ENCODE measurements at regions of chr2 and their contacts with region 1.

Region 1: GRCh38 chr2:25041928-25042320 is at the start of gene EFR3B:
- DNase-seq: peak; percentile 93
- H3K4me3 Mint-ChIP-seq: peak within 1 kb of the TSS; percentile 73
- H3K27ac Mint-ChIP-seq: no peak within 1 kb of the TSS
- H3K4me1 Mint-ChIP-seq: peaks cover 30% of the 10 kb centered on the region
- H3K27me3 Mint-ChIP-seq: peaks cover 39% of the 10 kb centered on the region
- total RNA-seq, gene EFR3B: 1.5 TPM

Region 2: DNA sequence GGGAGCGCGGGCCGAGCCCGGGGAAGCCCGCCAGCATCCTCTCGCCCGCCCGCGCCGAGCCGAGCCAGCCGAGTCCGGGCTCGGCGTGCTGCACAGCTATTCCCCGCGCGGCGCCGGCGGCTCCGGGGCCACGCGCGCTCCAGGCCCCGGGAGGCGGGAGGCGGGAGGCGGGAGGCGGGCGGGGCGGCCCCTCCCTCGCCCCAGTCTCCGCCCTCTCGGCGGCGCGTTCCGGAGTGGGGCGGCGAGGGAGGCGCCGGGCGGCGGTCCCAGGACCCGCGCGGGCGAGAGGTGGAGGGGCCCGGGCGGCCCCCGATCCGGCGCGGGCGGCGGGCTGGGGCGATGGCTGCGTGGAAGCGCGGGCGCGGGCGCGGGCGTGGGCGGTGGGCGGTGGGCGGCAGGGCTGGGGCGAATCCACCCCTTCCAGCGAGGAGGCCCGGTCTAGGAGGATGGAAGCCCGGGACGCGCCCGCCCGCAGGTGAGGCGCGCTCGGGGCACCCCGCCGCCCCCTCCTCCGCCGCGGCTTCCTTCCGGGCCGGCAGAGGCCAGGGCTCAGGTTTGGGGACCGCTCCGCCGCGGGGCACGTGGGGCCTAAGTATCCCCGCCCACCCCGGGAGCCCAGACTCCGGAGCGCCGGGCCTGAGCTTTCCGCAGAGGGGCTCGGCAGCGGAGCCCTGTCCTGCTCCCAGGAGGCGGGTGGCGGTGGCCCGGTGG is 121.7 kb before region 1 on chr2 and contains the start of gene ADCY3:
- CTCF ChIA-PET with region 1: no interaction called
- POLR2A ChIA-PET with region 1: no interaction called
- intact Hi-C with region 1: loop called (anchors 2 kb)
- DNase-seq: peak; percentile 77
- H3K4me3 Mint-ChIP-seq: peak within 1 kb of the TSS; percentile 97
- H3K27ac Mint-ChIP-seq: peak within 1 kb of the TSS; percentile 94
- H3K4me1 Mint-ChIP-seq: peaks cover 39% of the 10 kb centered on the region
- H3K27me3 Mint-ChIP-seq: no peaks in the 10 kb centered on the region
- total RNA-seq, gene ADCY3: 68.7 to 71.7 TPM

Region 3: DNA sequence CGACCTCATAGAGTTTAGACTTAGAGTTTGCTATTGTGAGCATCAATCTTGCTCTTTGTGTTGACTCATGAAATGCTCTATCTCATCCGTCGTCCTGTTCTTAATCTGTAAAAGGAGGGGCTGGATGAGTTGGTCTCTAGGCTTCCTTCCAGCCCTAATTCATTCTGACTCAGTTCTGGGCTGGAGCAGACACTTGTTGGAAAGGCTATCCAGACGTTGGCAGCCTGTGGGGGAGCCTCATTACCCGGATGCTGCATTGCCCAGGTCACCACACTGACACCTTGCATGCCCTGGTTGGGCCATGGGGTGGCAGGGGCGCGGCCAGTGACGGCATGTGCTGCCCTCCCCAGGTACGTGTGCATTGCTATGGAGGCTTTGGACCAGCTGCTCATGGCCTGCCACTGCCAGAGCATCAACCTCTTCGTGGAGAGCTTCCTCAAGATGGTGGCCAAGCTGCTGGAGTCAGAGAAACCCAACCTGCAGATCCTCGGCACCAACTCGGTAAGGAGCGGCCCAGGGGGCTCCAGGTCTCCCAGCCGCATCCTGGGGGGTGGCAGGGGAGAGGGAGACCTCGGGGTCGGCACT is 61.5 kb after region 1 on chr2:
- CTCF ChIA-PET with region 1: no interaction called
- POLR2A ChIA-PET with region 1: no interaction called
- intact Hi-C with region 1: loop called (anchors 10 kb)
- DNase-seq: no peak
- H3K4me3 Mint-ChIP-seq: no peak overlapping the region
- H3K27ac Mint-ChIP-seq: no peak overlapping the region
- H3K4me1 Mint-ChIP-seq: peaks cover 15% of the 10 kb centered on the region
- H3K27me3 Mint-ChIP-seq: peaks cover 3% of the 10 kb centered on the region

Region 4: DNA sequence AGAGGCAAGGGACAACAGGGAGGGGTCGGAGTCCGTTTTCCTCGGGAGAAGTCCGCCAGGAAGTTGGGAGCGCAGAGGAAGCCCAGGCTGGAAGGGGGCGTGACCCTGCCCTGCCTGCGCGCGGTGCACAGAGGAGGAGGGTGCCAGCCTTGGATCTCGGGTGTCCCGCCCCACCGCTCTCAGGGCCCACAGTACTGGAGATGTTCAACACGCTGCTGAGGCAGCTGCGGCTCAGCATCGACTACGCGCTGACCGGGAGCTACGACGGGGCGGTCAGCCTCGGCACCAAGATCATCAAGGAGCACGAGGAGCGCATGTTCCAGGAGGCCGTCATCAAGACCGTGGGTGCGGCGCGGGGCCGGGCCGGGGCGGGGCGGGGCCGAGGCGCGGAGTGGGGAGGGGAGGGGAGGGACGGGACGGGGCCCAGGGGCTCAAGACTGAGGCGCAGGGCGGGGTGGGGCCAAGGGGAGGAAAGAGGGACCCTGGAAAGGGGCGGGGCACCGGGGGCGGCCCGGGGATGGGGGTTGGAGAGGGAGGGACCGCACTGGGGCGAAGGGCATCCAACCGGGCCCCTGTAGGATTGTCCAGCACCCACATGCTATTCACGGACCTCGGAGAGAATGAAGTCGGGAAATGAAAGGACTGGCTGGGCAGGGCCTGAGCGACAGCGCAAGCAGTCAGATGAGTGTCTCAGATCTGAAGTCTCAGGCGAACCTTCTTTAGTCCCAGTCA is 89.8 kb after region 1 on chr2:
- CTCF ChIA-PET with region 1: interaction called, 6 read pairs
- POLR2A ChIA-PET with region 1: no interaction called
- intact Hi-C with region 1: loop called (anchors 2 kb)
- DNase-seq: peak; percentile 23
- H3K4me3 Mint-ChIP-seq: peak overlapping the region; percentile 48
- H3K27ac Mint-ChIP-seq: no peak overlapping the region
- H3K4me1 Mint-ChIP-seq: peaks cover 12% of the 10 kb centered on the region
- H3K27me3 Mint-ChIP-seq: peaks cover 50% of the 10 kb centered on the region

Region 5: DNA sequence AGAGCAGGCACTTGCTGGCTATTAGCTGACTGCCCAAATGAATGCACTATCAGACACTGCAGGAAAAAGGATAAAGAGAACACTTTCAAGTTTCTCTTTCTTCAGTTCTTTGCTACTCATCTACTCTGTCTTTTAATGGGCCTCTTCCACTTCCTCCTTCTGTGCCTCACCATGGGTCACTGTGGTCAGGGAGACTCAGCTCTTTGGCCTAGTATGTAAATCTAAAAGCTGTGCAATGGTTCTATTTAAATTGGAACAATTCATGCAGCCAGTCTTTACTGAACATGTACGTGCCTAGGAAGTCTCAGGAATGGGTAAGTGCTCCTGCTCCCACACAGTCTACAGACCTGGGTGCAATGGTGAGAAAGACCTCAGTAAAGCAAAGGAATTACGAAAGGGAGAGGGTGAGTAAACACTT is 378.9 kb after region 1 on chr2:
- CTCF ChIA-PET with region 1: no interaction called
- POLR2A ChIA-PET with region 1: no interaction called
- intact Hi-C with region 1: no loop called
- DNase-seq: no peak
- H3K4me3 Mint-ChIP-seq: no peak overlapping the region
- H3K27ac Mint-ChIP-seq: no peak overlapping the region
- H3K4me1 Mint-ChIP-seq: peaks cover 2% of the 10 kb centered on the region
- H3K27me3 Mint-ChIP-seq: no peaks in the 10 kb centered on the region

Region 6: GRCh38 chr2:26345545-26346453 is 1303.9 kb after region 1 on chr2 and contains the start of gene SELENOI:
- CTCF ChIA-PET with region 1: no interaction called
- POLR2A ChIA-PET with region 1: no interaction called
- intact Hi-C with region 1: loop called (anchors 5 kb)
- DNase-seq: peak; percentile 100
- H3K4me3 Mint-ChIP-seq: peak within 1 kb of the TSS; percentile 93
- H3K27ac Mint-ChIP-seq: peak within 1 kb of the TSS; percentile 94
- H3K4me1 Mint-ChIP-seq: peaks cover 33% of the 10 kb centered on the region
- H3K27me3 Mint-ChIP-seq: no peaks in the 10 kb centered on the region
- total RNA-seq, gene SELENOI: 31.9 to 34.2 TPM

Measured in activated CD4-positive, alpha-beta memory T cell treated with anti-CD3 and anti-CD28 coated beads for 36 hours (primary cell).